CD4-positive, alpha-beta T cell (primary cell): ENCODE measurements at regions of chr16 and their contacts with region 1.

Region 1: DNA sequence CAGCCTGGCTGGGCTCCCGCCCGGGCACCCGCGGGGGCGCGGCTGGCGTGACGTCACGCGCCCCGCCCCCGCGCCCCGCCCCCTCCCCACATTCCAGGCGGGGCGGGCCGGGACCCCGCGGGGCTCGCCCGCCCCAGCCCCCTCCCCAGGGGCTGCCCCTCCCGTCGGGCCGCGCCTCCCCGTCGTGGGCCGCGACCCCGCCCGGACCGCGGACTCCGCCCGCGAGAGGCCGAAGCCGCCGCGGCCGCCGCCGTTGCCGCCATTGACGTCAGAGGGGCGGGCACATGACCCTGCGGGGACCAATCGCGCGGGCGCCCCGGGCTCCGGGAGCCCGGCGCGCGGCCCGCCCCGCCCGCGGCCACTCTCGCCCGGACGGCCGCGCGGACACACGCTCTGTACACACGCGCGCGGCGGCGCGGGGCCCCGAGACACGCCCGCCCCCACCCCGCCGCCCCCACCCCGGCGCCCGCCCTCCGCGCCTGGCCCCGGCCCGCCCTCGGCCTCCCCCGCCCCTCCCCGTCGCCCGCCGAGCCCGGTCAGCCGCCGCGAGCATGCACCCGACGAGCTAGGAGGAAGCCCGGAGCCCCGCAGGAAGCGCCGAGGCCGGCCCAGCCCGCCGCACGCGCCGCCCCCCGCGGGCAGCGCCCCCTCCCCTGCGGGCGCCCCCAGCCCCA is at the start of gene CMIP:
- DNase-seq: peak; percentile 58 to 91 (median 72)
- ATAC-seq: peak; percentile 58
- H3K4me3 ChIP-seq: peak within 1 kb of the TSS; percentile 77
- H3K4me3 Mint-ChIP-seq: peak within 1 kb of the TSS; percentile 96
- H3K27ac ChIP-seq: peak within 1 kb of the TSS; percentile 41 to 48
- H3K27ac Mint-ChIP-seq: peak within 1 kb of the TSS; percentile 99
- H3K4me1 ChIP-seq: peaks cover 50% of the 10 kb centered on the region
- H3K4me1 Mint-ChIP-seq: peaks cover 54% of the 10 kb centered on the region
- H3K27me3 ChIP-seq: no peaks in the 10 kb centered on the region
- H3K27me3 Mint-ChIP-seq: no peaks in the 10 kb centered on the region
- CTCF ChIP-seq: no peak
- total RNA-seq, gene CMIP: 33.5 to 35.3 TPM

Region 2: DNA sequence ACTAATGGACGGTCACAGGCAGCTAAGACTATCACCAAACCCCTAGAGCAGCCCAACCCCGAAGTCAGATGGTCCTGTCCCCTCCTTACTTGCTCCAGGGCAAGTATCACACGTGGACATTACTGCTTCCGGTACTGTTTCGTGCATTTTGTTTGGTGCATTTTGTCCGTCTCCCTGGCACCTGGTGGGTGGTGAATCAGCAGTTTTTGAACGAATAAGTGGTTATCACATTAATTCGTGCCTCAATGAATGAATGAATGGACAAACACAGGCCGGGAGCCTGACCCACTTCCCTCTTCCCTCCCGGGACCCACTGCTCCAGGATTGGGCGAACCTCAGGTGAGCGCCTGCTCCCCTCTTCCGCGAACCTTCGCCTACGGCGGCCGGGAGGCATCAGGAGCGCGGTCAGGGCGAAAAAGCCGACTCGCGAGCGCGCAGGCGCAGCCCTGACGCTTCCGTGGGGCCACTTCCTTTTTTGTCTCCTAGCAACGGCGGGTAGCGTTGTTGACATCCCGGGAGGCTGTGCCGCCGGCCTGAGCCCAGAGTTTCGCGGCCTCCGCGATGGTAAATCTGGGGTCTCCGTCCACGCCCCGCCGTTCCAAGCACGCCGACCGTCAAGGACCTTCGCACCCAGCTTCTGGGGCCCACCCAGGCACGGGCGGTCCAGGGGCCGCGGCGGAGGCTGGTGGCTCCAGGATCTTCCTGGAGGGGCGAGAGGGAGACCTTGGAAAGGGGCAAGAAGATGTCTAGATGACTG is 903.9 kb before region 1 on chr16 and contains the start of gene DYNLRB2:
- CTCF ChIA-PET with region 1: no interaction called
- POLR2A ChIA-PET with region 1: no interaction called
- intact Hi-C with region 1: loop called in 1 of 2 experiments (anchors 10 kb)
- DNase-seq: peak; percentile 85 to 97 (median 89)
- ATAC-seq: peak; percentile 91
- H3K4me3 ChIP-seq: peak within 1 kb of the TSS; percentile 62
- H3K4me3 Mint-ChIP-seq: peak within 1 kb of the TSS; percentile 93
- H3K27ac ChIP-seq: peak within 1 kb of the TSS; percentile 36 to 62
- H3K27ac Mint-ChIP-seq: peak within 1 kb of the TSS; percentile 94
- H3K4me1 ChIP-seq: peaks cover 11% of the 10 kb centered on the region
- H3K4me1 Mint-ChIP-seq: peaks cover 17% of the 10 kb centered on the region
- H3K27me3 ChIP-seq: no peaks in the 10 kb centered on the region
- H3K27me3 Mint-ChIP-seq: peaks cover 4% of the 10 kb centered on the region
- CTCF ChIP-seq: no peak
- total RNA-seq, gene DYNLRB2: 0.31 TPM in 1 of 2 experiments, not detected in the other

Region 3: GRCh38 chr16:81314603-81315270 is 129.8 kb before region 1 on chr16 and contains the start of gene GAN:
- CTCF ChIA-PET with region 1: no interaction called
- POLR2A ChIA-PET with region 1: no interaction called
- intact Hi-C with region 1: loop called in 1 of 2 experiments (anchors 5 kb)
- DNase-seq: peak; percentile 85 to 97 (median 91)
- ATAC-seq: peak; percentile 96
- H3K4me3 ChIP-seq: peak within 1 kb of the TSS; percentile 78
- H3K4me3 Mint-ChIP-seq: peak within 1 kb of the TSS; percentile 95
- H3K27ac ChIP-seq: peak within 1 kb of the TSS in 1 of 2 donors; percentile 41
- H3K27ac Mint-ChIP-seq: peak within 1 kb of the TSS; percentile 89
- H3K4me1 ChIP-seq: peaks cover 27% of the 10 kb centered on the region
- H3K4me1 Mint-ChIP-seq: peaks cover 62% of the 10 kb centered on the region
- H3K27me3 ChIP-seq: no peaks in the 10 kb centered on the region
- H3K27me3 Mint-ChIP-seq: no peaks in the 10 kb centered on the region
- CTCF ChIP-seq: no peak
- total RNA-seq, gene GAN: 4.5 to 4.7 TPM

Region 4: GRCh38 chr16:81493755-81494433 is 49.3 kb after region 1 on chr16:
- CTCF ChIA-PET with region 1: no interaction called
- POLR2A ChIA-PET with region 1: no interaction called
- intact Hi-C with region 1: loop called in 1 of 2 experiments (anchors 10 kb)
- DNase-seq: peak in 8 of 14 experiments; percentile 4 to 69 (median 34)
- ATAC-seq: peak; percentile 43
- H3K4me3 ChIP-seq: no peak overlapping the region
- H3K4me3 Mint-ChIP-seq: no peak overlapping the region
- H3K27ac ChIP-seq: no peak overlapping the region
- H3K27ac Mint-ChIP-seq: peak overlapping the region; percentile 61
- H3K4me1 ChIP-seq: peaks cover 48% of the 10 kb centered on the region
- H3K4me1 Mint-ChIP-seq: peaks cover 65% of the 10 kb centered on the region
- H3K27me3 ChIP-seq: no peaks in the 10 kb centered on the region
- H3K27me3 Mint-ChIP-seq: no peaks in the 10 kb centered on the region
- CTCF ChIP-seq: no peak

Region 5: DNA sequence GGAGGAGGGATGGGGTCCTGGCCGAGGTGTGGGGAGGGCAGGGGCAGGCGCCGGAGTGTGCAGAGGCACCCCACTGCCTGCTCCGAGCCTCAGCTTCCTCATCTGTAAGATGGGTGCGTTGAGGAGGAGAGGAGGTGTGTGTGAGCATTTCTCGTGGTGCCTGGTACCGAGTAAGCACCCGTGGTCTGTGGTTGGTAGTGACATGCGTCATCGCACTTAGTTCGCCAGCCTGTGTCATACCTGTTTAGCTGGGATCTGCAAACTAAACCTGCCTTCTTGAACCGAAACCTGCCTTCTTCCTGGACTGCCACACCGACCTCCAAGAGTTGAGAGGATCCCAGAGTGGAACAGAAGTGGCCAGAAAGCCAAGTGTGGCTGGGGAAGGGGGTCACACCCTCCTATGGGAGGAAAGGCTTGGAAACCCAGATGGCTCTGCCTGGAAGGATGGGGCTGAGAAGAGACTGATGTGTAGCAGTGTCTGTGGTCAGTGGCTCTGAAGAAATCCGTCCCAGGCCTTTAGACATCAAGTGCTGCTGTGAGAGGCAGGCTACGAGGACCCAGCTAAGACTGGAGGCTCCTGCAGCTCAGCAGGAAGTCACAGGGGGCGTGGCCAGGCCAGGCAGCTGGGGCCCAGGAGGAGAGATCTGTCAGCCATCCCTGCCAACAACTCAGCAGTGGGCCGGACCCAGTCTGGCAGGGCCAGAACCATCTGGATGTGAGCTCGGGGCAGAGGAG is 171.9 kb after region 1 on chr16:
- CTCF ChIA-PET with region 1: no interaction called
- POLR2A ChIA-PET with region 1: interaction called, 13 read pairs
- intact Hi-C with region 1: no loop called
- DNase-seq: peak; percentile 59 to 90 (median 74)
- ATAC-seq: peak; percentile 94
- H3K4me3 ChIP-seq: peak overlapping the region; percentile 32
- H3K4me3 Mint-ChIP-seq: peak overlapping the region; percentile 72
- H3K27ac ChIP-seq: peak overlapping the region; percentile 70 to 87
- H3K27ac Mint-ChIP-seq: no peak overlapping the region
- H3K4me1 ChIP-seq: peaks cover 28% of the 10 kb centered on the region
- H3K4me1 Mint-ChIP-seq: no peaks in the 10 kb centered on the region
- H3K27me3 ChIP-seq: no peaks in the 10 kb centered on the region
- H3K27me3 Mint-ChIP-seq: no peaks in the 10 kb centered on the region
- CTCF ChIP-seq: no peak

Region 6: GRCh38 chr16:81703177-81704155 is 258.9 kb after region 1 on chr16:
- CTCF ChIA-PET with region 1: no interaction called
- POLR2A ChIA-PET with region 1: no interaction called
- intact Hi-C with region 1: no loop called
- DNase-seq: no peak
- ATAC-seq: no peak
- H3K4me3 ChIP-seq: no peak overlapping the region
- H3K4me3 Mint-ChIP-seq: no peak overlapping the region
- H3K27ac ChIP-seq: no peak overlapping the region
- H3K27ac Mint-ChIP-seq: no peak overlapping the region
- H3K4me1 ChIP-seq: peaks cover 5% of the 10 kb centered on the region
- H3K4me1 Mint-ChIP-seq: no peaks in the 10 kb centered on the region
- H3K27me3 ChIP-seq: no peaks in the 10 kb centered on the region
- H3K27me3 Mint-ChIP-seq: no peaks in the 10 kb centered on the region
- CTCF ChIP-seq: no peak